Aorta (tissue), 5 donors: ENCODE measurements at regions of chr15 and their contacts with region 1.

Region 1: DNA sequence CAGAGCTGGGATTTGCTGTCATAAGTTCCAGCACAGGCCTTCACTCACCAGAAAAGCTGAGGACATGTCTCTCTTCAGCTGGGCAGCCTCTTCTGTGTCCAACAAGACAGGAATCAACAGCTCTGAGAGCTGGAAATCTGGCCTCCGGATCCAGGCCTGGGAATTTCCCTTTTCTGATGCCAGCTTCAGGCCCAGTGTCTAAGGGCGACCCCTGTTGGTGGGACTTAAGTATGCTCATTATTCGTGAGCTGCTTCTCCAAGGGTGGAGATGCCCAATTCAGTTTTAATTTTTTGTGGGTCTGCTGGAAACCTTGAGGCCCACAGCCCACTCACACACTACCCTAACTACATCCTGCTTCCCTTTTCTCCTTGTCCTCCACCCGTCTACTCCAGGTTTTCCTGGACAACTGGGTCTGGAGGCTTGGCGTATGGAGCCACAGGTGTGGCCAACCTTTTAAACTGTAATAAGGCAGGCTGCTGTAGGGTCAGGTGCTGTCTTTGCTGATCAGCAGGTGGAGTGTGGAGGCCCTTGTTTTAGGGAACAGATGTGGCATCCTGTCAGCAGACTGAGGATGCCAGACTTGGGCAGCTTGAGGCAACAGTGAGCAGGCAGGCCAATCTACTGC is 2.6 kb upstream of the CEMIP start:
- DNase-seq: peak in 1 of 2 donors; percentile 73
- ATAC-seq: peak; percentile 61
- H3K4me3 ChIP-seq: no peak overlapping the region
- H3K27ac ChIP-seq: no peak overlapping the region
- H3K4me1 ChIP-seq: no peaks in the 10 kb centered on the region
- H3K27me3 ChIP-seq: no peaks in the 10 kb centered on the region

Region 2: GRCh38 chr15:80455668-80456442 is 320.7 kb before region 1 on chr15:
- intact Hi-C with region 1: loop called (anchors 2 kb)
- DNase-seq: peak in 1 of 2 donors; percentile 65
- ATAC-seq: peak; percentile 70
- H3K4me3 ChIP-seq: no peak overlapping the region
- H3K27ac ChIP-seq: no peak overlapping the region
- H3K4me1 ChIP-seq: no peaks in the 10 kb centered on the region
- H3K27me3 ChIP-seq: no peaks in the 10 kb centered on the region

Region 3: GRCh38 chr15:80567721-80568157 is 208.8 kb before region 1 on chr15:
- intact Hi-C with region 1: loop called (anchors 2 to 5 kb)
- DNase-seq: peak in 1 of 2 donors; percentile 55
- ATAC-seq: peak; percentile 80
- H3K4me3 ChIP-seq: no peak overlapping the region
- H3K27ac ChIP-seq: no peak overlapping the region
- H3K4me1 ChIP-seq: no peaks in the 10 kb centered on the region
- H3K27me3 ChIP-seq: no peaks in the 10 kb centered on the region

Region 4: DNA sequence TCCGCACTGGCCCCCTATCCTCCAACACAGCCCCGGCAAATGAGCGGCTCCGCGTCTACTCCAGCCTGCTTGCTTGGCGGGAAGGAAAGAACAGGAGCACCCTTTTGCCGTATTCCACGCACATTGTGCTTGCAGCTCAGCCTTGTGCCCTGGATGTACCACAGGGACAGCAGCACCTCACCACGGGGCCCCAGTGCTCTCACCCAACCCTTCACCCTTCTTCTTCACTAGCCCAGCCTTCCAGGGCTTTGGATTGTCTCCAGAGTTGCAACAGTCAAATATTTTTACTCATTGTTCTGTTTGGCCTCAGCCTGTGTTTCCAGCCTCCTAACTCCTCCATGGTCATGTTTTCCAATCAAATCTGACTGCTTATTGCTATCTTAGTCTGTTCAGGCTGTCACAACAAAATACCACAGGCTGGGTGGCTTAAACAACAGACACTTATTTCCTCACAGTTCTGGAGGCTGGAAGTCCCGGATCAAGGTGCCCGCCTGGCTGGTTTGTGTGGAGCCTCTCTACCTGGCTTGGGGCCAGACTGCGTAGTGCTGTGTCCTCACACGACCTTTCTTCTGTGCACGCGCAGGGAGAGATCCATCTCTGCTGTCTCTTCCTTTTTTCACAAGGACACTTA is 160.7 kb before region 1 on chr15:
- intact Hi-C with region 1: loop called in 1 of 2 experiments (anchors 5 kb)
- DNase-seq: no peak
- ATAC-seq: peak; percentile 53
- H3K4me3 ChIP-seq: no peak overlapping the region
- H3K27ac ChIP-seq: no peak overlapping the region
- H3K4me1 ChIP-seq: no peaks in the 10 kb centered on the region
- H3K27me3 ChIP-seq: no peaks in the 10 kb centered on the region

Region 5: GRCh38 chr15:80629355-80629754 is 147.2 kb before region 1 on chr15:
- intact Hi-C with region 1: no loop called
- DNase-seq: no peak
- ATAC-seq: no peak
- H3K4me3 ChIP-seq: no peak overlapping the region
- H3K27ac ChIP-seq: no peak overlapping the region
- H3K4me1 ChIP-seq: no peaks in the 10 kb centered on the region
- H3K27me3 ChIP-seq: no peaks in the 10 kb centered on the region

Region 6: DNA sequence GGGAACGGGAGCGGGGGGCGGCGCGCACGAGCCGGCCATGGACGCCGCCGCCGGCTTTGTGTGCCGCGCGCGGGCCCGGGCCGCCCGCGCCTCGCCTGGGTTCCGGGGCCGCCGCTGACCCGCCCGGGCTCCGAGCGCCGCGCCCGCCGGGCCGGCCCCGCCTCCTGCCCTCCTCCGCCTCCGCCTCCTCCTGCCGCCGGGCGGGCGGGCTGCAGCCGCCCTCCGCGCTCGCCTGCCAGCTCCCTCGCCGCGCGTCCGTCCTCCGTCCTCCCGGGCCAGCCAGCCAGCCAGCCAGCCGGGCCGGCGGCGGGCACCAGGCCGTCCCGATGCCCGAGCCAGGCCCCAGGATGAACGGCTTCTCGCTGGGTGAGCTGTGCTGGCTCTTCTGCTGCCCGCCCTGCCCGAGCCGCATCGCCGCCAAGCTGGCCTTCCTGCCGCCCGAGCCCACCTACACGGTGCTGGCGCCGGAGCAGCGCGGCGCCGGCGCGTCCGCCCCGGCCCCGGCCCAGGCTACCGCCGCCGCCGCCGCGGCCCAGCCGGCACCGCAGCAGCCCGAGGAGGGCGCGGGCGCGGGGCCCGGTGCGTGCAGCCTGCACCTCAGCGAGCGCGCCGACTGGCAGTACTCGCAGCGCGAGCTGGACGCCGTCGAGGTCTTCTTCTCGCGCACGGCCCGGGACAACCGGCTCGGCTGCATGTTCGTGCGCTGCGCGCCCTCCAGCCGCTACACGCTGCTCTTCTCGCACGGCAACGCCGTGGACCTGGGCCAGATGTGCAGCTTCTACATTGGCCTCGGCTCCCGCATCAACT is 81.2 kb before region 1 on chr15 and contains the start of gene ABHD17C:
- intact Hi-C with region 1: loop called in 1 of 2 experiments (anchors 5 kb)
- DNase-seq: peak; percentile 75 to 88
- ATAC-seq: peak; percentile 82
- H3K4me3 ChIP-seq: peak within 1 kb of the TSS; percentile 94 to 99
- H3K27ac ChIP-seq: peak within 1 kb of the TSS; percentile 70 to 84
- H3K4me1 ChIP-seq: no peaks in the 10 kb centered on the region
- H3K27me3 ChIP-seq: no peaks in the 10 kb centered on the region
- total RNA-seq, gene ABHD17C: 4.2 to 8.3 TPM

Region 7: DNA sequence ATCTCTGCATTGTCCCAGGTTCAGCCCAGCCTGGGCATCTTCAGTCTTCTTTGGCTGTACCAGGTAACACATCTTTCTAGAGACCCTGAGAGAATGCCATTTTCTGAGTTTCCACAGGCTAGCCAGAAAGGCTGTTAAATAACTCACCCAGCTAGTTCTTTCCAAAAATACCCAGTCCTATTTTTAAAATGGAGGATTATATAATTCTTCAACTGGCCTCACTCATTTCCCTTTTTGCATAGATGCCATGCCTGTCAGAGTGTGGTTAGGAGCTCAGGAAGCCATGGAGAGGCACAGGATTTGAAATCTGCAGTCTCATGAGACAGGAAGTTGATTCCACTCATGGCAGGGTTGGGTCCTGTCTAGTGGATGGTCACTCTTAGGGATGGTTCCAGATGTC is 42.5 kb after region 1 on chr15:
- intact Hi-C with region 1: no loop called
- DNase-seq: no peak
- ATAC-seq: no peak
- H3K4me3 ChIP-seq: no peak overlapping the region
- H3K27ac ChIP-seq: peak overlapping the region; percentile 52 to 55
- H3K4me1 ChIP-seq: peaks cover 3 to 7% of the 10 kb centered on the region in 2 donors
- H3K27me3 ChIP-seq: no peaks in the 10 kb centered on the region

Region 8: GRCh38 chr15:80970018-80970658 is 193.6 kb after region 1 on chr15:
- intact Hi-C with region 1: loop called (anchors 2 to 5 kb)
- DNase-seq: no peak
- ATAC-seq: peak; percentile 85
- H3K4me3 ChIP-seq: no peak overlapping the region
- H3K27ac ChIP-seq: no peak overlapping the region
- H3K4me1 ChIP-seq: no peaks in the 10 kb centered on the region
- H3K27me3 ChIP-seq: no peaks in the 10 kb centered on the region